ENCODE measurements at regions of chr22 and their contacts with region 1.

Region 1: DNA sequence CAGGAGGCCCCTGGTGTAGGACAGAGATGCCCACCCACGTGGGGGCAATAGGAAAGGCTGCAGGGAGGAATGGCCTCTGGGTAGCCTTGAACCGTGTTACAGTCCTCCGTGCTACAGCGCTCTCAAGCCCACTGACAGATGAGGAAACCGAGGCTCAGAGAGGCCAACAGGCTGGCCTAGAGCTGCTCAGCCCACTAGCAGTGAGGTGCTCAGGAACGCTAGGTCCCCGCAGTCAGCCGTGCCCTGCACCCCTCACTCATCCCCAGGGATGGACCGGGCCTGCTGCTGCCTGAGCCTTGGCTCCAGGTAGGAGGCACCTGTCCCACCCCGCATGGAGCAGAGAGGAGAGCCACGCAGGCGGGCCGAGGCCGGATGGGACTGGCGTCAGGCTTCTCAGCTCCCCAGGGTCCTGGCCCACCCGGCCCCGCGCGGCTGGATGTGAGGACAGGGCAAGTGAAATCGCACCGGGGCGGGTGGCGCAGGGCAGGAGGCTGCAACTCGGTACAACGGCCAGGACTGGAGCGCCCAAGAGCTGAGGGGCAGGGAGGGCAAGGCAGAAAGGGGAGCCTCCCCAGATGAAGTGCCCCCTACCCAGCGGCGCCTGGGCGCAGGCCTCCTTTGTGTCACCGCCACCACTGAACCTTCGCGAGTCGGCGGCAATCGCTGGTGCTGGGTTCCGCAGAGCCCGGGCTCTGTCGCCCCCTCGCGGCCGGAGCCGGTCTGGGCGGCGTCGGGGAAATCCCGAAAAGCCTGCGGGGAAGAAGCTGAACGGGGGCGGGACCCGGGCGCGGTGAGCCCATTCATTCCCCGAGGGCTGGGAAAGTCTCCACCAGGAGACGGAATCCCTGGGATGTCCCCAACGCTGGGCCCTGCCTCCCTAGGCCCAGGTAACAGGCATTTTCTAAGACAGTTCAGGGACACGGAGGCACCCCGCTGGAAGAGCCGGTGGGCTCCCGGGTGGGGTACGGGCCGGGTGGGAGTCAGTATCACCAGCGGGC is 8.4 kb upstream of the SLC2A11 start:
- DNase-seq: peak; percentile 69 to 92 (median 82)
- H3K4me3 ChIP-seq: peak overlapping the region in 37 of 59 donors; percentile 8 to 48 (median 31)
- H3K27ac ChIP-seq: peak overlapping the region in 10 of 59 donors; percentile 21 to 67 (median 35)
- H3K27me3 ChIP-seq: no peaks in the 10 kb centered on the region
- CTCF ChIP-seq: peak; percentile 82 to 99 (median 97)

Region 2: GRCh38 chr22:23098718-23099530 is 750.4 kb before region 1 on chr22:
- intact Hi-C with region 1: no loop called
- DNase-seq: peak in 8 of 10 donors; percentile 48 to 96 (median 66)
- H3K4me3 ChIP-seq: peak overlapping the region in 15 of 59 donors; percentile 0 to 33 (median 20)
- H3K27ac ChIP-seq: peak overlapping the region; percentile 42 to 100 (median 91)
- H3K27me3 ChIP-seq: no peaks in the 10 kb centered on the region
- CTCF ChIP-seq: peak in 2 of 56 donors; percentile 9 to 23

Region 3: DNA sequence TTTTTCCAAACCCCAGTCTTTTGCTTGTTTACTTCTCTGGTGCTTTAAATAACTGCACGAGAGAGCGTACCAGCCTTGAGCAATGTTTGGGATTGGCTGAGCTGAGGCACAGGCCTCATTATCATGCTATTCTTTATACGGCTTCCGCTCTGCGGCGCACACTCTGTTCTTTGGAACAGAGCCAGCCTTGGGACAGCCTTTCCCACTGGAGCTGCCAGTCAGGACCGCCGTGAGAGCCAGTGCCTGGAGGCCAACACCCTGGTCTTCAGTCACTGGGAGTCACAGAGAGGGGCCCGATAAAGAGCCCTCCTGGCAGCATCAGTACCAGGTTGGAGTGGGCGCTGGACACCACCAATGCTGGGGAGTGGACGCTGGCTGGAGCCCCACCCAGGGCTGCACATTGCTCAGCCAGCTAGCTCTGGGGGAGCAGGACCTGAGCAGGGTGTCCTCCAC is 543.4 kb before region 1 on chr22:
- intact Hi-C with region 1: loop called in 1 of 2 experiments (anchors 10 kb)
- DNase-seq: peak; percentile 80 to 96 (median 88)
- H3K4me3 ChIP-seq: peak overlapping the region in 52 of 59 donors; percentile 8 to 63 (median 40)
- H3K27ac ChIP-seq: peak overlapping the region; percentile 73 to 100 (median 97)
- H3K27me3 ChIP-seq: no peaks in the 10 kb centered on the region
- CTCF ChIP-seq: peak in 8 of 56 donors; percentile 7 to 33 (median 13)

Region 4: DNA sequence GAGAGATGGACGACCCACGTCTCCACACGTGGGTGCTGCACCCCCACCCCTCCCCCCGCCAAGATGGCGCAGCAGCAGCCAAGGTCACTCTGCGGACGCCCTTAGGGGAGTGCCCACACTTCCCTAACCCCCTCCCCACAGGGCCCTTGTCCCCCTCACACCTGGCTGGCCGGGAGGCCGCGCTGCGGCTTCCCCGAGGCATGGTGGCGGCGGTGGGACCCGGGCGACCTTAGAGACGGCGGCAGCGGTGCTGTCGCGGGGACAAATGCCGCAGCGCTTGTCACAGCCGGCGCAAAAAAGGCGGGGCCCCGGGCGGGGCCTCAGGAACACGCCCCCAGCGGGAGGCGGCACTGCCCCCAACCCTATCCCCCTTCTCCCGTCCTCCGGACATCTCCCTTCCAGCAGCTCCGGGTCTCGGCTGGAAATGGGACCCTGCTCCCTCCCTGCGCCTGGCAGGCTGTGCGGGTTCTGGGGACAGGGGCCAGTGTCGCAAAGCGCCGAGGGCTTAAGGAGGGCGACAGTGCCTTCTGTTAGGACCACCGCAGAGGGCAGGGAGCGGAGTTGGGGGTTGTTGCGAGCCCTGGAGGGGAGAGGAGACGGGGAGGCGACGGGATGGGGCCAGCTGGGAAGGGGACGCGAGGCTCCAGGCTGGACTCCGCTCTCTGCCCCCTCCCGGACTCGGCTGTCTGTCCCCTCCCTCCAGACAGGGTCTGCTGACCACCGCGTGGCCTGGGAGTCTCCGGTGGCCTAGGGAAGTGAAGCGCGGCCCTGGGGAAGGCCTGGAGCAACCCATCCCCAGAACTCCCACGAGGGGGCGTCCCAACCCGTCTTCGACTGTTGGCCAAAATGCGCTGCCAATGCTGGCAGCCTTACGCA is 81.4 kb before region 1 on chr22 and contains the start of gene CHCHD10:
- intact Hi-C with region 1: loop called (anchors 5 kb)
- DNase-seq: peak; percentile 82 to 91 (median 88)
- H3K4me3 ChIP-seq: peak within 1 kb of the TSS; percentile 56 to 97 (median 80)
- H3K27ac ChIP-seq: peak within 1 kb of the TSS; percentile 52 to 98 (median 93)
- H3K27me3 ChIP-seq: no peaks in the 10 kb centered on the region
- CTCF ChIP-seq: peak; percentile 38 to 93 (median 86)
- total RNA-seq, gene CHCHD10: 87.5 to 320 (median 183) TPM

Region 5: DNA sequence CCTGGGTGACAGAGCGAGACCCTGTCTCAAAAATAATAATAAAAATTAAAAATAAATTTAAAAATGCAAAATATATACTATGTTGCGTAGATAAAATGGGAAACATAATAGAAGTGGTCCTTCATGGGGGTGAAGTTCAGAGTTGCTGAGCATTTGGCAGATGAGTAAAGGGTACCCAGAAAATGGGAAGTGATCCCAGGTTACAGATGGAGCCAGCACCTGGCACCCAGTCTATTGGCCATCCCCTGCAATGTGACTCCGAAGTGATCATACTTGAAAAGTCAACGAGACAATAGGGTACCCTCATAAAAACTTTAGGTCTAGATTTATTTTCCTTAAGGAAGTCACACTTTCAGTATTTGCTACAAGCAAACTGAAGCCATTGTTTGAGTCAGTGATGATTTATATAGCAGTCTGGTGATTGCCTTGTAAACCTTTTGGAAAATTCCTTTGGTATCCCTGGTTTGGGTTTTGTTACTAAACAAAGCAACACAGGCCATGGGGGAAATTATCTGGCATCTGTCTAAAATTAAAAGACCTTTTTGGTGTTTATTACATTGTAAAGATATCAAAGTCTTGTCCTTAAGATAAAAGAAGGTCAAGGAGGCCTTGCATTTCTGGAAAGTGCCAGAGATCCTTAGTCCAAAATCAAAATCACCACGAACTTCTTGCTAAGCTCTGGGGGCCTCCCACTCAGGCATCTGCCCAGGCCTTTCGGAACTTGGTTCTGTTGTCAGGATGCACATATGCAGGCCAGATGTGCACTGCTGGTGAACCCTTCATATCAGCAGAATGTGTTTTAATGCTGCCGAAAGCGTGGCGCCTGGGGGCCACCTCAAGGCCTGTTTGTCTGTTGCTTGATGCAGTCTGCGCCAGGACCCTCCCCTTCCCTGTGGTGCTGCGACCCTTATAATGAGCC is 58.2 kb before region 1 on chr22:
- intact Hi-C with region 1: no loop called
- DNase-seq: no peak
- H3K4me3 ChIP-seq: no peak overlapping the region
- H3K27ac ChIP-seq: peak overlapping the region in 10 of 59 donors; percentile 1 to 47 (median 16)
- H3K27me3 ChIP-seq: no peaks in the 10 kb centered on the region
- CTCF ChIP-seq: no peak

Region 6: DNA sequence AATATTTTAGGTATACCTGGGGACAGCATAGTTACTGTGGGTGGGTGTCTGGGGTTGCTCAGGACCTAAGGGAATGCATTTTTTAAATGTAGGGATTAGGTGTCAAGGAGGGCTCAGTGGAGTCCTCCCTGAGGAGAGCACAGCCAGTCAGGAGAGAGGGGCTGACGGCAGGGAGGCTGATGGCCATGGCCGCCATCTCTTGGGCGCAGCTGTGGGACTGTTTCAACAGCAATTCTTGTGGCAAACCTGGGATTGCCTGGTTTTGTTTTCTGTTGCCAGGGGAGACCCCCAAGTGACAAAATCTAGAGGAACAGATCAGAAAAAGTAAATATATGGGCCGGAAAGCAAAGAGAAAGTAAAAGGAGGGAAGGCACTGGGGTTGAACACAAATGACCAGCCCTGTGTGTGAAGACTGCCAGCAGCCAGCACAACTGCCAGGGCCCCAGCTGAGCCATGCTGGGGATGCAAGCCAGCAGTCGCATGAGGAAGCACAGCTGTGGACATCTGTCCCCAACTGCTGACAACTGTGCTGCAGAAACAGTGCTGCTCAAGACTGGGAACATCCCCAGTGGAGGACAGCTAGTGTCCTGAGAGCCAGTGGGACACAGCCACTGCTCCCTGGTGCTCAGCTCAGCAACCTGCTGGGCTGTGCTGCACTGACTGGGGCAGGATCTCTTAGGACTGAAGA is 55.4 kb after region 1 on chr22:
- intact Hi-C with region 1: no loop called
- DNase-seq: peak in 9 of 10 donors; percentile 73 to 89 (median 83)
- H3K4me3 ChIP-seq: peak overlapping the region in 40 of 59 donors; percentile 2 to 63 (median 38)
- H3K27ac ChIP-seq: peak overlapping the region in 53 of 59 donors; percentile 8 to 84 (median 67)
- H3K27me3 ChIP-seq: no peaks in the 10 kb centered on the region
- CTCF ChIP-seq: peak in 9 of 56 donors; percentile 6 to 42 (median 17)